PC-9 (cell line): ENCODE measurements at regions of chr3 and their contacts with region 1.

Region 1: DNA sequence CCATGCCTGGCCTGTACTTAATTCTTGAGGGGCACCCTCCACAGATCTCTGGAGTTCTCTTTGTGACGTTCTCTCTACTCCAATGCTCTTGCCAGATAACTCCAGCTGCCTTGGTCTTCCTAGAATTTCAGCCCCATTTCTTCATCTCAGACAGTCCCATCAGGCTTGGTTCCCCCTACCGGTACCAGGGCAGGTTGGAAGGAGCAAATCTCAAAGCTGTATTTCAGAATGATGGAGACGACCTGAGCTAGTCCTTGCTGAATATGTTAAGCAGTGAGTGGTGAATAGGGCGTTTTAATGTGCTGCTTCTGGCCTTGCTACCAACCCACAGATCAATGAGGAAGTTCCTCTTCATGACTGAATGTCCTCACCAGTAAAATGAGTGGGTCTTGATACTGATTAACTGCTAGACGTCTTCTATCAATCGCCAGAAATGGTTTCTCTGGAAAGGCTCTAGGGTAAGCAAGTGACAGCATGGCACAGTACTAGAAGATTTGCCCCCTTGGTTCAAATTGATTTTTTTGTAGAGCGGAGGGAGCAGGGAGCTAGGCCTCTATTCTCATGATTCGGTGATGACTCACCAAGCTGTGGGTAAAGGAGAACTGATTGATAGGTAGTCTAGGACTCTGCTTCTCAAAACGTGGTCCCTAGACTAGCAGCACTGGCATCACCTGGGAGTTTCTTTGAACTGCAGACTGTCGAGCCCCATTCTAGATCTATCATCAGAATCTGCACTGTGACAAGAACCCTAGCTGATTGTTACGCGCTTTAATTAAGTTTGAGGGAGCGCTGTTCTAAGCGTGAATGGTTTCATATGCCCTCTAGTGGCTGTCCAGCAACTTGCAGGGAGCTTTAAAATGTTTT is 67.8 kb downstream of the UBP1 start:
- DNase-seq: peak in 1 of 2 experiments; percentile 34
- H3K4me3 ChIP-seq: no peak overlapping the region
- H3K27ac ChIP-seq: no peak overlapping the region
- H3K4me1 ChIP-seq: no peaks in the 10 kb centered on the region
- H3K27me3 ChIP-seq: no peaks in the 10 kb centered on the region
- CTCF ChIP-seq: peak; percentile 83

Region 2: GRCh38 chr3:32947789-32948238 is 424.6 kb before region 1 on chr3:
- CTCF ChIA-PET with region 1: no interaction called
- POLR2A ChIA-PET with region 1: no interaction called
- intact Hi-C with region 1: loop called (anchors 5 kb)
- DNase-seq: peak; percentile 60 to 78
- H3K4me3 ChIP-seq: no peak overlapping the region
- H3K27ac ChIP-seq: no peak overlapping the region
- H3K4me1 ChIP-seq: no peaks in the 10 kb centered on the region
- H3K27me3 ChIP-seq: no peaks in the 10 kb centered on the region
- CTCF ChIP-seq: peak; percentile 73

Region 3: GRCh38 chr3:33023172-33024136 is 349.0 kb before region 1 on chr3:
- CTCF ChIA-PET with region 1: no interaction called
- POLR2A ChIA-PET with region 1: no interaction called
- intact Hi-C with region 1: loop called (anchors 5 kb)
- DNase-seq: peak in 1 of 2 experiments; percentile 84
- H3K4me3 ChIP-seq: no peak overlapping the region
- H3K27ac ChIP-seq: peak overlapping the region; percentile 12; the same call in 1 of the 2 replicates
- H3K4me1 ChIP-seq: peaks cover 11% of the 10 kb centered on the region; the same call in 1 of the 2 replicates
- H3K27me3 ChIP-seq: no peaks in the 10 kb centered on the region
- CTCF ChIP-seq: peak; percentile 21; the same call in 1 of the 2 replicates

Region 4: GRCh38 chr3:33131331-33132018 is 241.0 kb before region 1 on chr3:
- CTCF ChIA-PET with region 1: interaction called, 50 read pairs
- POLR2A ChIA-PET with region 1: no interaction called
- intact Hi-C with region 1: loop called (anchors 1 kb)
- DNase-seq: peak; percentile 43 to 48
- H3K4me3 ChIP-seq: no peak overlapping the region
- H3K27ac ChIP-seq: no peak overlapping the region
- H3K4me1 ChIP-seq: no peaks in the 10 kb centered on the region
- H3K27me3 ChIP-seq: no peaks in the 10 kb centered on the region
- CTCF ChIP-seq: peak; percentile 77

Region 5: GRCh38 chr3:33277193-33277882 is 95.1 kb before region 1 on chr3 and contains the start of gene FBXL2:
- CTCF ChIA-PET with region 1: interaction called, 5 read pairs
- POLR2A ChIA-PET with region 1: no interaction called
- intact Hi-C with region 1: loop called (anchors 5 kb)
- DNase-seq: peak; percentile 54 to 88
- H3K4me3 ChIP-seq: peak within 1 kb of the TSS; percentile 72
- H3K27ac ChIP-seq: no peak within 1 kb of the TSS
- H3K4me1 ChIP-seq: peaks cover 5% of the 10 kb centered on the region; the same call in 1 of the 2 replicates
- H3K27me3 ChIP-seq: no peaks in the 10 kb centered on the region
- CTCF ChIP-seq: no peak
- total RNA-seq, gene FBXL2: 15.8 and 18.5 TPM in 2 replicates

Region 6: GRCh38 chr3:33360136-33360825 is 12.2 kb before region 1 on chr3:
- CTCF ChIA-PET with region 1: interaction called, 17 read pairs
- POLR2A ChIA-PET with region 1: no interaction called
- intact Hi-C with region 1: no loop called
- DNase-seq: peak; percentile 52 to 87
- H3K4me3 ChIP-seq: peak overlapping the region; percentile 38; the same call in 1 of the 2 replicates
- H3K27ac ChIP-seq: peak overlapping the region; percentile 94
- H3K4me1 ChIP-seq: peaks cover 26% of the 10 kb centered on the region
- H3K27me3 ChIP-seq: no peaks in the 10 kb centered on the region
- CTCF ChIP-seq: no peak

Region 7: DNA sequence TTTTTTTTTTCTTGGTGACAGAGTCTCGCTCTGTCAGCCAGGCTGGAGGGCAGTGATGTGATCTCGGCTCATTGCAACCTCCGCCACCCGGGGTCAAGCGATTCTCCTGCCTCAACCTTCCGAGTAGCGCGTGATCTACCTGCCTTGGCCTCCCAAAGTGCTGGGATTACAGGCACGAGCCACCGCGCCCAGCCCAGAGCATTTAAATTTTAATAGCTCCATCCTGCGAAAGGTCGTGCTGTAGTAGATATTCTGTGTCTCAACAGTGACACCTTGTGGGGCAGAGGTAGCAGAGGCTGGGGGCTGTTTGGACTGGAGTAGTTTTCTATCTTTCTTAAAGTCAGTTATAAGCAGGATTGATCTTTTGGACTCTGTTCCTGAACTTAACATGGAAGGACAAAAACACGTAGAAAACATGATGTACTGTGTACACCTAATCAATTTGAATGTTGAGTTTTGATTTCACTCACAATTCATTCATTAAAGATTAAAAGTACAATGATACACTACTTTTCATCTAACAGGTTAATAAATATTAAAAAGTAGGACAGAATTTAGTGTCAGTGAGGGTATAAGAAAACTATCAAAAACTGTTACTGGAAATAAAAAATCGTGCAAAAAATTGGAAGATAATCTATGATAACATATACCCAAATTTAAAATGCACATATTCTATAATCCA is 415.0 kb after region 1 on chr3:
- CTCF ChIA-PET with region 1: no interaction called
- POLR2A ChIA-PET with region 1: no interaction called
- intact Hi-C with region 1: loop called (anchors 10 kb)
- DNase-seq: peak in 1 of 2 experiments; percentile 31
- H3K4me3 ChIP-seq: no peak overlapping the region
- H3K27ac ChIP-seq: no peak overlapping the region
- H3K4me1 ChIP-seq: peaks cover 4% of the 10 kb centered on the region; the same call in 1 of the 2 replicates
- H3K27me3 ChIP-seq: no peaks in the 10 kb centered on the region
- CTCF ChIP-seq: peak; percentile 69